ENCODE measurements at regions of chr20 and their contacts with region 1.

Region 1: DNA sequence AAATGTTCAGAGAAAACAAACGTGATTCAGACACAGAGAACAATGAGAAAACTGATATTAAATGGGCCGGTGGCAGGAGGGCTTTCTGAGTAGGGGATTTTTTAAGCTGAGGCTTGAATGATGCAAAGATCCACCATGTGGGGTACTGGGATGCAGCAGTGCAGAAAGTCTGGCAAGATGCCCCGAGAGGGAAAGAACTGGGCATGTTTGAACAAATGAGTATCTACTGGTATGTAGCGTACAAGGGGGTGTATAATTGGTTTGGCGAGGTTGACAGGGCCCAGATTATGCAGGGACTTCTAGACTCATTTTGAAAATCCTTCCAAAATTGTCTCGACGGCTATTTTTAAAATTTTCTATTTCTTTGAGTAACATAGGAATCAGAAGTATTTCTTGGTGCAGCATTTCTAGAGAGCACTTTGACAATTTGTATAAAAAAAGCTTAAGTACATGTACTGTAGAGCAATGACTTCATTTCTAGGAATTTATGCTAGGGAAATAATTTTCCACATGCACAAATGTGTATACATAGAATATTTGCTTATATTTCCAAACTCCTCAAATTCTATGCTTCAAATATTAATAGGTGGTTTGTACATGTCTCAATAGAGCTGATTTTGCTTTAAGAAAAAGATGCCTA is 119.6 kb upstream of the DOK5 start:
- DNase-seq: peak; percentile 46
- H3K4me3 Mint-ChIP-seq: no peak overlapping the region
- H3K27ac Mint-ChIP-seq: no peak overlapping the region
- H3K4me1 Mint-ChIP-seq: peaks cover 2% of the 10 kb centered on the region
- H3K27me3 Mint-ChIP-seq: no peaks in the 10 kb centered on the region

Region 2: GRCh38 chr20:54219751-54220426 is 135.9 kb before region 1 on chr20:
- intact Hi-C with region 1: loop called (anchors 2 kb)
- DNase-seq: no peak
- H3K4me3 Mint-ChIP-seq: no peak overlapping the region
- H3K27ac Mint-ChIP-seq: no peak overlapping the region
- H3K4me1 Mint-ChIP-seq: peaks cover 20% of the 10 kb centered on the region
- H3K27me3 Mint-ChIP-seq: no peaks in the 10 kb centered on the region

Region 3: DNA sequence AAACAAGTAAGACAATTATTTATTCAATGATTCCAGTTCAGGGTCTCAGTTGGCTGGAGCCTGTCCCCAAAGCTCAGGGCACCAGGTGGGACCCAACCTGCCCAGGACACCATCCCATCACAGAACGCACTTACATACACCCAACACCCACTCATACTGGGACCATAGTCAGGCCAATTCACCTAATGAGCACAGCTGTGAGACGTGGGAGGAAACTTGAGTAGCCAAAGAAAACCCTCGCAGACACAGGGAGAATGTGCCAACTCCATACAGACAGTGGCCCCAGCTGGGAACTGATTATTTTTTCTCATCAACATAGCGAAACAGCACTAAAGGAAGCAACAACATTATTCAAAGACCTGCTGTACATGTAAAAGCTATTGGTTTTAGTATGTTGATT is 61.0 kb after region 1 on chr20:
- intact Hi-C with region 1: no loop called
- DNase-seq: no peak
- H3K4me3 Mint-ChIP-seq: no peak overlapping the region
- H3K27ac Mint-ChIP-seq: no peak overlapping the region
- H3K4me1 Mint-ChIP-seq: no peaks in the 10 kb centered on the region
- H3K27me3 Mint-ChIP-seq: no peaks in the 10 kb centered on the region